Sciatic nerve (tissue), 2 donors: ENCODE measurements at regions of chr11 and their contacts with region 1.

Region 1: DNA sequence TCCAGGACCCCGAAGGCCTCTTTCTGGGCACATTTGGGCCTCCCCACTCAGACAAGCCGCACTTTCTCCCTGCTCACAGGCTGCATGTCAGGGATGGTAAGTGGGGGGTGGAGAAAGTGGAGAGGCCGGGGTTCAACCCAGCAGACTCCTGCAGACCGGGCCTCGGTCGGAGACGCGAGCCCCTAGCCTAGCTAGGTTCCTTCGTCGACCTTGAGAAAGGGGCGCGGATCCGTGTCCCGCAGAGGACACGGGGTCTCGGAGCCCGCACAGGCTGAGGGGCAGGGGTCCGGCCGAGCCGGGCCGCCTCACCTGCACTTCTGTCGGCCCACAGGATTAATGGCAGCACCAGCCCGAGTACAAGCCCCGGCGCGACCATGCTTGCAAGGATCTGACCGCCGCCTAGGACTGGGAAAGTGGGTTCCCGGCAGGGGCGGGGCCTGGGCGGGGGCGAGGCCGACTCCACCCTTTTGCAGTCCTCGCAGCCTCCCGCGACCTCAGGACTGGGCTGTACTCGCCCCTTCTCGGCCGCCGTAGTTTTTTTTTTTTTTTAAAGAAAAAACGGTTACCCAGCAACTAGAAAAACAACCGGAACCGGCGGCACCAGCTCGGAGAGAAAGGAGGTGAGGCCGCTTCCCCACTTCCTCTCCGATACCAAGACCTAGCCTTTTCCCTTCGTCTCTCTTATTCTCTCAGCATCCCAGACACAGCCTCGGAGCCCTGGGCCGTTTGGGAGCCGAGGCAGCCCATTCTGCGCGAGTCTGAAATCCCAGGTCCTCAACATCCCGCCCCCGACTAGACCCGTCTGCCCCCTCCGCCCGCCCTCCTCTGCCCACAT is at the starts of genes SIAE and SPA17:
- DNase-seq: peak; percentile 95
- ATAC-seq: peak; percentile 99
- total RNA-seq, gene SIAE: 12.3 TPM
- total RNA-seq, gene SPA17: 2.5 TPM

Region 2: DNA sequence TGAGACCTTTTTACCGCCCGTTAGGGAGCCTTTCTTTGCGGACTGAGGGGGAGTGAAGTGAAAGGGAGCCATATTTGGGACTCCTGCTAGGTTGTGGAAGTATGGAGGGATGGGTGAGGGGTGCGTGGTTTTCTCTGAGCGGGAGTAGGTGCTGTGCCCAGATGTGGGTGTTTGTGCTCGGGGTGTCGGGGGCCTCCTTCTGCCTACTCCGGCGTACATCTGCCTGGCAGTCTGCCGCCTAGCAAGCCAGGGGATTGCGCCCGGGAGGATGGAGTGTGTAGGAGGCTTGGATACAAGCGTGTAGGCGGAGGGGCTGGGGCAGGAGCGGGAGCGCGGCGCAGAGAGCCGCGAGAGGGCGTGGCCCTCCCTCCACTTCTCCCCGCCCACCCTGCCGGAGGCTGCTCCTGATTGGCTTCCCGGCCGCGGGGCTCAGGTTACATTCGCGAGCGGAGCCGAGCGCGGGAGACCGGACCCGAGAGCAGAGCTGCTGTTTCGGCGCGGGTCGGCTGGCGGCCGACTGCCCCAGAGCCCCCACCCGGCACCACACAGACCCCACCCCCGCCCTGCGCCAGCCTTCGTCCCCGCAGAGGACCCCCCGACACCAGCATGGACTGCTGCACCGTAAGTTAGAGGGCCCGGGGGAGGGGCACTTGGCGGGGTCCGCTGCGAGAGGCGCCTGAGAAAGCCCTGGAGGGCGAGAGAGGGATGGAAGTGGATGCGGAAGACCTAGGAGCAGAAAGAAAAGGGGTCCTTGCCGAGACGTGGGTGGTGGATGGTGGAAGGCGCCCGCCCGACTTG is 66.1 kb after region 1 on chr11 and contains the start of gene NRGN:
- intact Hi-C with region 1: loop called (anchors 10 kb)
- DNase-seq: peak; percentile 92
- ATAC-seq: peak; percentile 98
- total RNA-seq, gene NRGN: 6.2 TPM

Region 3: DNA sequence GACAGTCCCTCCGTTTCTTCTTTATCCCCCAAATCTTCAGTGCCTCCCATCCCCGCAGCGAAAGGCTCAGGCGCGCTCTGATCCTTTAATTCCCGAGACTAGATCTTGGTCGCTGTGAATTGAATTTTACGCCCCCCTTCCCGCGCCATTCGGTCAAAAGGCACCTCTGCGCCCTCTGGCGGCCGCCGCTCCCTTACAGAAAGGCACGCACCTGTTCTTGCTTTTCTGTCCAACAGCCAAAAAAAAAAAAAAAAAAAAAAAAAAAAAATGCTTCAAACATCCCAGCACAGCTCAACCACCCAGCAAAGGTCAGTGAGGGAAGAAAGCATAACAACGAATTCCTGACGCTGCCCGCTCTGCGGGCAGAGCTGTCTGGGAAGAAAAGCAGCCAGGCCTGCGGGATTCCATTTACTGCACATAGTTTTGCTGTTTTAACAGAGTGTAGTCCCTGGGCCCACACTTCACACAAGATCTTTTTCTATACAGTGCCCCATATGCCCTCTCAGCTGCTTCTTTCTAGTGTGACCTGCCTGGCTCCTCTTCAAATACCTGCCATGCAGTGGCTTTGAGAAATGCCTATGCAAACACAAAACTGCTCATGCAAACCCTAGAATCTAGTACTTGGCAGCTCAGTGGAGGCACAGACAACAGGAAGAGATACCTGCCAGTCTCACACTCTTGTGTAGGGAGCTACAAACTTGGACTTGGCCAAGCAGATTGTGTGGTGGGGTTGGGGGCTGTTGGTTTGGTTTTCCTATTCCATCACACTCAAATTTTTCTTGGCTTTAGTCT is 89.8 kb after region 1 on chr11:
- intact Hi-C with region 1: loop called (anchors 10 kb)
- DNase-seq: peak; percentile 91
- ATAC-seq: peak; percentile 44

Region 4: DNA sequence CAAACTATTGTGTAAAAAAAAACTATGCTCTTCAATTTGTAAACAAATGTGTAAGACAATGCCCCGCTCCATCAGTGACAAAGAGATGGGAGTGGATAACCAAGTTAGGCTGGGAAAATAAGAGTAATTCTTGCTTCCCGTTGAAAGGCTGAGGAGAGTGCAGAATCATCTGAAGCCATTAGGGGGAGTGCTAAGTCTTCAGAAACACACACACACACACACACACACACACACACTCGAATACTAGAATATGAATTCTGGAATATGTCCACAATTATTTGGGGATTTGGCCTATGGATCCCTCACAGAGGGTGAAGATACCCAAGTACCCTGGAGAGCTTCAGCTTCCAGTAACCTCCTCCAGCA is 163.9 kb after region 1 on chr11:
- intact Hi-C with region 1: loop called (anchors 10 kb)
- DNase-seq: no peak
- ATAC-seq: peak; percentile 66

Region 5: DNA sequence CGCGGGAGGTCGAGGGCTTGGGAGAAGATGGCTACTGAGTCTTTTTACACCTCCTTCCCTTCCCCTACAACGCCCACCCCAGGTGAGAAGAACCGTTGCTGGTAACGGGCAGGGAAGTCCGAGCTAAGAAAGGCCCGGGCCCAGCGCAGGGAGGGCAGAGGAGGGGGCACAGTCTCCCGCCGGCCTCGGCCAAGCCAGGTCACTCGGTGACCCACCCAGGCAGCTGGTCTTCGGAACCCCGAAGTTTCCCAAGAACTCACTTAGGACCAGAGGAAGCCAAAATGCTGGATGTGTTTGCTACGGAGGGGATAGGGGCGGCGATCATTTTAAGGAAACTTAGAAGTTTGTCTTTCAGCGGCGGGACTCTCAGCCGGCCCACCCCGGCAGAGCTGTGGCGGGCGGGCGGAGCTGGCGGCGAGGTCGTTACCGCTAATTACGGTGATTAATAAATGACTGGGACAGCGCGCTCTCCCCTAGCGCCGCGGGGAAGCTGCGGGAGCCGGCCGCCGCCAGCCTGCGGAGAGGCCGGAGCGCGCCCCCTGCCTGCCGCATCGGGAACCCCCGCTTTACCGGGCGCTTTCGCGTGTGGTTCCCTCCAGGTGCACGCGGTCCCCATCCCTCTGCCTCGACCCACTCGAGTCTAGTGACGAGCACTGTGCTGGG is 192.5 kb after region 1 on chr11:
- intact Hi-C with region 1: loop called (anchors 10 kb)
- DNase-seq: no peak
- ATAC-seq: no peak